Activated CD4-positive, alpha-beta T cell treated with anti-CD3 and anti-CD28 coated beads, Interleukin-2, amount 10 ng/mL, durations not matched to agents 24 days and 14 days (primary cell): ENCODE measurements at regions of chr1 and their contacts with region 1.

Region 1: DNA sequence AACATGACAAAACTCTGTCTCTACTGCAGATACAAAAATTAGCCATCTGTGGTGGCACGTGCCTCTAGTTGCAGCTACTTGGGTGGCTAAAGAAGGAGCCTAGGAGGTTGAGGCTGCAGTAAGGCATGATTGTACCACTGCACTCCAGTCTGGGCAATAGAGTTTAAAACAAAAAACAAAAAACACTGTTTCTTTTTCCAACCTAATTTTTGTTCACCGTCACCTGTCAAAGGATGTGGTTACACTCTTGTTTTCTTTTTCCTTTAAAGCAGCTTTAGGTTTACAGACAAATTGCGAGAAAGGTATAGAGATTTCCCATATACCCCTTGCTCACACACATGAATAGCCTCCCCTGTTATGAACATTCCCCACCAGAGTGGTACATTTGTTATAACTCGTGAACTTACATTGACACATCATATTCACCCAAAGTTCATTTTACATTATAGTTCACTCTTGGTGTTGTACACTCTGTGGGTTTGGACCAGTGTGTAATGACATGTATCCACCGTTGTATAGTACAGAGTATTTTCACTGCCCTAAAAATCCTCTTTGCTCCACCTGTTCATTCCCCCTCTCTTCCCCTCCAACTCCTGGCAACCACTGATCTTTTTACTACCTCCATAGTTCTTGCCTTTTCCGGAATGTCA is 26.2 kb downstream of the SMG7 start:
- DNase-seq: peak; percentile 69
- H3K4me3 Mint-ChIP-seq: peak overlapping the region; percentile 73
- H3K27ac Mint-ChIP-seq: peak overlapping the region; percentile 58
- H3K4me1 Mint-ChIP-seq: peaks cover 41% of the 10 kb centered on the region
- H3K27me3 Mint-ChIP-seq: no peaks in the 10 kb centered on the region

Region 2: DNA sequence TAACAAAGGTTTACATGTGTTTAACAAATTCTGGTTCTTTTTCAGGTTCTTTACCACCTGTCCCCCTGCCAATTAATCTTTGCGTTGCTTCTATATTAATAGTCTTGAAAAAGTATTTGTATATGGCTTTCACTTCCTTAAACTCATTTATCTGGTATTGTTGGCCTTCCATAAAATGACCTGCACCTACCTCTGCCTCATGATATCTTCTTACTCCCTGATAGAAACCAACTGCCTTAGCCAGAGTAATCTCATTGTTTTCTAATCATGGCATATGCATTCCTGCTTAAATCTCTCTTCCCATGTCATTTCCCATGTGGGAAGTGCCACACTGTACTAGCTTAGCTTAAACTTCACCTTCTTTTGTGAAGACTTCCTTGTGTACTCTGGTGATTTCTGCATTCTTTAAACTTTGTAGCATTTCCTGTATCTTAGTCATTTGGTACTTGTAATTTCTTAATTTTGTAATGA is 17.5 kb before region 1 on chr1:
- intact Hi-C with region 1: loop called (anchors 2 kb)
- DNase-seq: no peak
- H3K4me3 Mint-ChIP-seq: peak overlapping the region; percentile 52
- H3K27ac Mint-ChIP-seq: peak overlapping the region; percentile 14
- H3K4me1 Mint-ChIP-seq: peaks cover 50% of the 10 kb centered on the region
- H3K27me3 Mint-ChIP-seq: no peaks in the 10 kb centered on the region